MCF 10A (cell line): ENCODE measurements at regions of chr21 and their contacts with region 1.

Region 1: DNA sequence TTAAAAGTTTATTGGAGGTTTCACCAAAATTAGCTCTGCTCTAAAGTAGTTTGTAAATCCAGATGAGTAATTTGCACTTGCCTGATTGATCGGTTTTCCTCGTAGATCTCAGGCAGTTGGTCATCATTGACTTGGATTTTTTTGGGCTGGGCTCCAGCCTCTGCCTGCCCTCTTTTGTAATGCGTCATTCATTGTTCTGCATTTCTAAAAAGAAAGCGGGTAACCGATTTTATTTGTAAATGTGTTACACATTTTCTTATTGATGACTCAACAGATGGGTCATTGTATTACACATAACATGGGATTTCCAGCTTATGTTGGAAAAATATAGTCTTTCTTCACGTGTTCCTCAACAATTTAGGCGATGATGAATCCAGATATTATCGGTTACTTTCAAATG is 5.5 kb downstream of the ETS2 start:
- DNase-seq: peak; percentile 96
- H3K4me3 Mint-ChIP-seq: peak overlapping the region; percentile 97
- H3K27ac Mint-ChIP-seq: peak overlapping the region; percentile 83
- H3K4me1 Mint-ChIP-seq: peaks cover 33% of the 10 kb centered on the region
- H3K27me3 Mint-ChIP-seq: no peaks in the 10 kb centered on the region
- CTCF ChIP-seq: no peak

Region 2: DNA sequence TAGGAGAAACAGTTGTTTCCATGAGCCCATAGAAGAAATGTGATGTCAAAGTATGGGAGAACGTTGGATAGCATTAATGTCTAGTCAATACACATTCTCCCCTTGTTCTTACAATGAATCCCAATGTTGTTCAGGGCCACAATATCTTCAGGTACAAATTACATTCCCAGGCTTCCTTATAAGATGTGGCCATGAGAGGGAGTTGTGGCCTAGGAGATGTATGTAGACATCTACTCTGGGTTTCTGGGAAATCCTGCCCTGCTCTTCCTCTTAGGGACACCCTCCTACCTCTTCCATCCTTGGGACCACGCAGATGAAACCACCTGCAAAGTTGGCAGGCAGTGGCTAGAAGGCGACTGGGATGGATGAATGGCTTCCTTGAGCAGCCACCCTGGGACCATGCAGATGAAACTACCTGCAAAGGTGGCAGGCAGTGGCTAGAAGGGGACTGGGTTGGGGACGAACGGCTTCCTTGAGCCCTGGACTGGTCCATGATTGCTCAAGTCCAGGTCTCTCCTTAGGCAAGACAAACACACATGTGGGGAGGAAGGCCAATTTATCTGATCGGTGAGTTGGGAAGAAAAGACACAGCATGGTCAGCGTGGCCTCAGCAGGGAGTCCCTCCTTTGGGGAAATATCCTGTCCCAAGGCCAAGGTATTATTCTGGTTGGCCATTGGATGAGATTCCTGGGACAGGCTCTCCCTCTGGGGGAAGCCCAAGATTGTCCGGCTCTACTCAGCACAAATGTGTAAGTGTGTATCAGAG is 196.9 kb before region 1 on chr21:
- CTCF ChIA-PET with region 1: no interaction called
- POLR2A ChIA-PET with region 1: no interaction called
- intact Hi-C with region 1: no loop called
- DNase-seq: no peak
- H3K4me3 Mint-ChIP-seq: no peak overlapping the region
- H3K27ac Mint-ChIP-seq: no peak overlapping the region
- H3K4me1 Mint-ChIP-seq: no peaks in the 10 kb centered on the region
- H3K27me3 Mint-ChIP-seq: peaks cover 29% of the 10 kb centered on the region
- CTCF ChIP-seq: peak; percentile 9

Region 3: DNA sequence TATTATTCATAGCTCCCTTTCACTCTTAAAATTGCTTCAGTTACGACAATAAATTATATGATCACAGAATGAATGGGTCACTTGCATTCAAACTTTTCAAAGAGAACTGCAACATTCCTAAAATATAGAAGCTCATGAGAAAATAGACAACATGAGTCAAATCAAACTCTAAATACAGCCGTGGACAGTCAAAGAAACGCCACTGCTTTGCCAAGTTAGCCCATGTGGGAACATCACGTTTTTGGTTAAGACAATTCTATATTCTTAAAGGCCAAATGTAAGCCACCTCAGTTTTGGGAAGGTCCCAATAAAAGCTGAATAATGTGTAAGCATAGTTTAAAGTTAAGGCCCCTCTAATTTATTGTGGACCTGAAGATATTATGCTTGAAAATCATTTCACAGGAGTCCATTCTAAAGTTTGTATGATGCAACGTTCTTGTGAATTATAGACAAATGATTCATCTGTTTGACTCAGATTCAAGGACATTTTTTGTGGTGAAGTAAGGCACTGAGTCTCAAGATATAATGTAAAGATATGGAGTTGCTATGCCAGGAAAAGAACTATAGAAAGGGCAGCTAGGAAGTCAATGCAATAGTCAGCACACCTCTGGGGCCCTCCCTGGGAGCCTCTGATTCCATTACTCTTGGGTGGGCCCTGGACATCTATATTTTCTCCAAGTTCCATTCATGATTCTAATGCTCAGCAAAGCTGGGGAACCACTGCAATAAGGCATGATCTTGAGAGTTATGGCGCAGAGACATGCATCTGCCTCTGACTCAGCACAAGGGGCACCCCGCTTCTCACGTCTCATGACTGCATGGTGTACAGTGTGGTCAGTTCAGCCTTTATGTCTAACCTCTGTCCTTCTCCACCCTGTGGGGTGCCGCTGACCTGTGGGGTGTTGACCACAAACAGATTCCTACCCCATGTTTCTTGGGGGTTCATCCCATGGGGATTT is 28.4 kb after region 1 on chr21:
- CTCF ChIA-PET with region 1: no interaction called
- POLR2A ChIA-PET with region 1: interaction called, 28 read pairs
- intact Hi-C with region 1: loop called (anchors 2 kb)
- DNase-seq: peak; percentile 89
- H3K4me3 Mint-ChIP-seq: peak overlapping the region; percentile 15
- H3K27ac Mint-ChIP-seq: peak overlapping the region; percentile 88
- H3K4me1 Mint-ChIP-seq: peaks cover 46% of the 10 kb centered on the region
- H3K27me3 Mint-ChIP-seq: no peaks in the 10 kb centered on the region
- CTCF ChIP-seq: no peak

Region 4: DNA sequence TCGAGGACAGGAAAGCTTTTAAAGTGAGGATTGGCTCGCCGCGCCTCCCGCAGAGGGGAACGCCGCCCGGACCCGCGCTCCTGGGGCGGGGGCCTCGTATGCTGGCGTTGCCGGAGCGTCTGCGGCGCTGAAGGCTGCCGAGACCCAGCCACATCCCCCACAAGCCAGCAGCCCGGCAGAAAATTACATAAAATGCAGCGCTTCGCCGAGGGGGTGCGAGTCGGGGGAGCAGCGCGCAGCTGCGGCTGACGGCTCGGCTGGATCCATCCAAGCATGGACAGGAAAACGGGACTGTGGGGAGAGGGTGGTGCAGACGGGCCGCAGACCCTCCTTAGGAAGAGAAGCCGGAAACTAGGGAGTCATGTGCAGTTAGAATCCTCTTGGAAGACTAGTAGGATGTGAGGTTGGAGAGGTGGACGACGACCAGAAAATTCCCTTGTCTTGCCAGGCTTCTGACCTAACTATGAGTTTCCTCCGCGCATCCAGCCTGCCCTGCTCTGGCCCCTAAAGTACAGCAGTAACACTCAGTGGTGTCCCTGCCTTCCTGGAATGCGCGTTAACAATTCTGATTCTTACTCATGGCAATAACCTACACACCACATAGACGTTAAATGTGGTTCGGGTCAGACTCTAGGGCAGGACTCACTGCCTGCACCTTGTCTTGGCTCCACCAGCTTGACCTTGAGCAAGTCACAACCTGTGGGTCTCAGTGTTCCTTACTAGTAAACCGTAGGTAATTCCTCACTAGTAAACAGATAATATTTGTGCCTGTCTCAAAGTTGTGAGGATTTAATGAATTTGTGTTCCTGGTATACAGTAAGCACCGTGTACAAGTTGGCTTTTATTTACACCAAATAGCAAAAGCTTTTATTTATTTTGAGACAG is 503.1 kb after region 1 on chr21:
- CTCF ChIA-PET with region 1: no interaction called
- POLR2A ChIA-PET with region 1: no interaction called
- intact Hi-C with region 1: no loop called
- DNase-seq: peak; percentile 44
- H3K4me3 Mint-ChIP-seq: peak overlapping the region; percentile 76
- H3K27ac Mint-ChIP-seq: peak overlapping the region; percentile 94
- H3K4me1 Mint-ChIP-seq: peaks cover 20% of the 10 kb centered on the region
- H3K27me3 Mint-ChIP-seq: no peaks in the 10 kb centered on the region
- CTCF ChIP-seq: no peak